Posterior vena cava (tissue), 2 donors: ENCODE measurements at regions of chr2 and their contacts with region 1.

Region 1: GRCh38 chr2:77737236-77737635 is 215.1 kb upstream of the LRRTM4 start:
- DNase-seq: no peak

Region 2: DNA sequence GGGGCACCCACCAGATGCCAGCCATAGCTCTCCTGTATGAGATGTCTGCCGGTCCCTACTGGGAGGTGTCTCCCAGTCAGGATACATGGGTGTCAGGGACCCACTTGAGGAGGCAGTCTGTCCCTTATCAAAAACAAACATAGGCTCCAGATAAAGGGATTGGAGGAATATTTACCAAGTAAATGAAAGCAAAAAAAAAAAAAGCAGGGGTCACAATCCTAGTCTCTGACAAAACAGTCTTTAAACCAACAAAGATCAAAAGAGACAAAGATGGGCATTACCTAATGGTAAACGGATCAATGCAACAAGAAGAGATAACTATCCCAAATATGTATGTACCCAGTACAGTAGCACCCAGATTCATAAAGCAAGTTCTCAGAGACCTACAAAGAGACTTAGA is 425.0 kb after region 1 on chr2:
- intact Hi-C with region 1: loop called in 1 of 2 experiments (anchors 5 kb)
- DNase-seq: no peak